ENCODE measurements at regions of chr4 and their contacts with region 1.

Region 1: GRCh38 chr4:8403173-8403753 is 37.3 kb downstream of the ACOX3 start:
- DNase-seq: peak; percentile 86 to 92
- ATAC-seq: peak; percentile 84 to 91 (median 90)
- H3K4me3 ChIP-seq: no peak overlapping the region
- H3K27ac ChIP-seq: peak overlapping the region; percentile 63
- H3K4me1 ChIP-seq: peaks cover 12% of the 10 kb centered on the region
- H3K27me3 ChIP-seq: no peaks in the 10 kb centered on the region
- CTCF ChIP-seq: peak; percentile 95

Region 2: GRCh38 chr4:8176547-8177399 is 226.5 kb before region 1 on chr4:
- intact Hi-C with region 1: loop called in 1 of 2 experiments (anchors 5 kb)
- DNase-seq: peak in 1 of 2 donors; percentile 74
- ATAC-seq: peak; percentile 73 to 82 (median 78)
- H3K4me3 ChIP-seq: no peak overlapping the region
- H3K27ac ChIP-seq: no peak overlapping the region
- H3K4me1 ChIP-seq: peaks cover 21% of the 10 kb centered on the region
- H3K27me3 ChIP-seq: no peaks in the 10 kb centered on the region
- CTCF ChIP-seq: peak; percentile 84

Region 3: GRCh38 chr4:8241895-8242696 is 161.2 kb before region 1 on chr4:
- intact Hi-C with region 1: loop called (anchors 1 to 2 kb)
- DNase-seq: peak; percentile 89 to 94
- ATAC-seq: peak; percentile 90 to 94 (median 92)
- H3K4me3 ChIP-seq: no peak overlapping the region
- H3K27ac ChIP-seq: no peak overlapping the region
- H3K4me1 ChIP-seq: peaks cover 8% of the 10 kb centered on the region
- H3K27me3 ChIP-seq: no peaks in the 10 kb centered on the region
- CTCF ChIP-seq: peak; percentile 99

Region 4: DNA sequence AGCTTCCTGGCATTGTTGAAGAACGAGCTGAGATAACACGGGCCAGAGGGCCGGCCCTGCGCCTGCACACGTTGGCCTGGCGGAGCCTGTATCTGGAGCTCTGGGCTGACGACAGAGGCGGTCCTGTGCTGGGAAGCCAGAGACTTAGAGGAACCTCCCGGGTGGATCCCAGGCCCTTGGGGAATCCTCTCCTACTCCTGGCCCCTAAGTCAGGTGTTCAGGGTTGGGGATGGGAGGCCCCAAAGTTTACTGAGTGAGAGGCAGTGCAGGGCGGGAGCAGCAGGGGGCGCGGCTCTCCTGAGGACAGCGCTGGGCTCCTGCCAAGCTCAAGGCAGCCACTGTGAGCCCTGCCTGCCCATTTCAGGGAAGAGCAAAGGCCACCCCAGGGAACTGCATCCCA is 136.2 kb before region 1 on chr4:
- intact Hi-C with region 1: loop called (anchors 2 to 5 kb)
- DNase-seq: peak; percentile 79 to 86
- ATAC-seq: peak; percentile 59 to 73 (median 68)
- H3K4me3 ChIP-seq: no peak overlapping the region
- H3K27ac ChIP-seq: no peak overlapping the region
- H3K4me1 ChIP-seq: peaks cover 6% of the 10 kb centered on the region
- H3K27me3 ChIP-seq: no peaks in the 10 kb centered on the region
- CTCF ChIP-seq: peak; percentile 50